ENCODE measurements at regions of chr2 and their contacts with region 1.

Region 1: DNA sequence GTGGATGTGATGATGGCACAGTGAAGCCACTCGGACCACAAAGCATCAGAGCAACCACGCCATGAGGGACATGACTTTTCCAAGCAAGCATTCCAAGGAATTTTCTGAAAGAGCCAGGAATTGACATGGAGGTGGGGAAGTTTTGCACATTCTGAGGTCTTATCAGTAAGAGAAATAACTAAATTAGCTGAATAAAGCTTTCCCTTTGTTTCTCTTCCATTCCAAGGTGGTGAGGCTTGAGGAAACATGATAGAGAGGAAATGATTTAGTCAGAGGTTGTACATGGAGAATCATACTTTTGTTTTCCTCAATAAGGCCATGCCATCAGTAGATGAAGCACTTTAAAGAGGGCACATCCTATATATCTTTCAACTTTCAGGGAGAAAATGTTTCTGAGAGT is 115.7 kb upstream of the MMADHC start:
- DNase-seq: no peak
- H3K4me3 ChIP-seq: no peak overlapping the region
- CTCF ChIP-seq: no peak
- POLR2A ChIP-seq: no peak

Region 2: DNA sequence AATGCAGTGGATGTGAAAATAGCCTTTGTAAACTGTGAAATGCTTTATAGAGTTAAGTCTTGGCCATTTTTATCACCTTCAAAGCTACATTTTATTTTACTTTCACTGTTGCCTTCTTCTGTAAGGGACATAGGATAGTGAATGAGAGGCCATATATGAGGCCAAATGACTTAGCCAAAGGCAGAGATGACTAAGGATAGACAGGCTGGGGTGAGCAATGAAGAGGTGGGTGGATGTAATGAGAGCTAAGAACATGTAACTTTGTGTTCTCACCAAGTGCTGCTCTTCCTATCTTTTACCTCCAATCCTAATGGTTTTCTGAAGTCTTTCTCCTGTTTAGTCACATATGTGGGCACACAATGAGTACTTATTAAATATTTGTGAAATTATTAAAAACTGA is 1580.5 kb before region 1 on chr2:
- intact Hi-C with region 1: loop called (anchors 5 kb)
- DNase-seq: no peak
- H3K4me3 ChIP-seq: no peak overlapping the region
- CTCF ChIP-seq: no peak
- POLR2A ChIP-seq: no peak

Region 3: GRCh38 chr2:149296031-149296430 is 407.2 kb before region 1 on chr2:
- intact Hi-C with region 1: no loop called
- DNase-seq: no peak
- H3K4me3 ChIP-seq: no peak overlapping the region
- CTCF ChIP-seq: no peak
- POLR2A ChIP-seq: no peak

Region 4: DNA sequence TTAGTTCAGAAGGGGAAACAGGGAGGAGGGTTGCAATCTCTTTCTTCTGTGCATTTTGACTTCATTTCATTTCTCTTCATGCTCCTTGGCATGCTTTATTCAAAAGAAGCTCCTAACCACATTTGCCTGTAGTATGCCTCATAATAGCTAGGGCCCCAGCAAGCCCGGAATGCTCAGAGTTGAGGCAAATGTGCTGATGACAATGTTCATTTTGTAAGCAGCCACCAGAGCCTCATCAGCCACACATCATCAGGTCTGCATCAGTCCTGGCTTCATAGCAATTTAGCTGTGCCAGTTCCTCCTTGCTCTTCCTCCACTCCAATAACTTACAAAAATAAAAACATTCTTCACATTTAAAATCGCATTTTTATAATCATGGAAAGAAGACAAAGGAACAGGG is 50.4 kb before region 1 on chr2:
- intact Hi-C with region 1: no loop called
- DNase-seq: no peak
- H3K4me3 ChIP-seq: no peak overlapping the region
- CTCF ChIP-seq: no peak
- POLR2A ChIP-seq: no peak

Region 5: GRCh38 chr2:149799013-149799705 is 95.9 kb after region 1 on chr2:
- intact Hi-C with region 1: no loop called
- DNase-seq: no peak
- H3K4me3 ChIP-seq: no peak overlapping the region
- CTCF ChIP-seq: no peak
- POLR2A ChIP-seq: no peak

Region 6: DNA sequence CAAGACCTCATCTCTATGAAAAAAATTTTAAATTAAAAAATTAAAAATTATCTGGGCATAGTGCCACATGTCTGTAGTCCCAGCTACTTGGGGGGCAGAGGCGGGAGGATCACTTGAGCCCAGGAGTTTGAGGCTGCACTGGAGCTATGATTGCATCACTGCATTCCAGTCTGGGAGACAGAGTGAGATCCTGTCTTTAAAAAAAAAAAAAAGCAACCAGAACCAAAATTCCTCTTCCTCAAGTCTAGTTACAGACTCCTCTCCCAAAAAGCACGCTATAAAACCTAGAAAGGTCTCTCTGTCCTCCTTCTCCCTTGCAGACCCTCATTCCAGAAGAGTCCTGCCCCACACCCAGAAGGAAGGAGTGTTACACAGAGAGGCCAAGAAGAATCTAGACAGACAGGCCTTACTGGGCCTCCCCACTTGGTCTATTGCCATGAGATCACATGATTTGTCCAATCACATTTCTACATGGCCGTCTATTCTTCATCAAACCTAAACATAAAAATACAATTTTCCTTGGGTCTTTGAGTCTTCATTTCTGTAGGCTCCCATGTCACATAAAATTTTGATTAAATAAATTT is 1678.1 kb after region 1 on chr2:
- intact Hi-C with region 1: no loop called
- DNase-seq: no peak
- H3K4me3 ChIP-seq: no peak overlapping the region
- CTCF ChIP-seq: no peak
- POLR2A ChIP-seq: no peak